ENCODE measurements at regions of chr3 and their contacts with region 1.

Region 1: GRCh38 chr3:123723522-123724168 is 138.8 kb upstream of the HACD2 start:
- DNase-seq: peak in 6 of 9 donors; percentile 37 to 55 (median 44)
- ATAC-seq: peak; percentile 68
- H3K4me3 ChIP-seq: no peak overlapping the region
- H3K4me3 Mint-ChIP-seq: no peak overlapping the region
- H3K27ac ChIP-seq: no peak overlapping the region
- H3K27ac Mint-ChIP-seq: no peak overlapping the region
- H3K4me1 ChIP-seq: no peaks in the 10 kb centered on the region
- H3K4me1 Mint-ChIP-seq: peaks cover 0 to 2% (median 0%) of the 10 kb centered on the region in 7 donors
- H3K27me3 ChIP-seq: no peaks in the 10 kb centered on the region
- H3K27me3 Mint-ChIP-seq: peaks cover 8 to 12% (median 9%) of the 10 kb centered on the region in 5 donors

Region 2: GRCh38 chr3:122957707-122958689 is 765.6 kb before region 1 on chr3:
- CTCF ChIA-PET with region 1: no interaction called
- POLR2A ChIA-PET with region 1: no interaction called
- intact Hi-C with region 1: no loop called
- DNase-seq: no peak
- ATAC-seq: no peak
- H3K4me3 ChIP-seq: no peak overlapping the region
- H3K4me3 Mint-ChIP-seq: no peak overlapping the region
- H3K27ac ChIP-seq: no peak overlapping the region
- H3K27ac Mint-ChIP-seq: no peak overlapping the region
- H3K4me1 ChIP-seq: no peaks in the 10 kb centered on the region
- H3K4me1 Mint-ChIP-seq: no peaks in the 10 kb centered on the region
- H3K27me3 ChIP-seq: no peaks in the 10 kb centered on the region
- H3K27me3 Mint-ChIP-seq: peaks cover 4 to 32% (median 17%) of the 10 kb centered on the region in 5 donors

Region 3: DNA sequence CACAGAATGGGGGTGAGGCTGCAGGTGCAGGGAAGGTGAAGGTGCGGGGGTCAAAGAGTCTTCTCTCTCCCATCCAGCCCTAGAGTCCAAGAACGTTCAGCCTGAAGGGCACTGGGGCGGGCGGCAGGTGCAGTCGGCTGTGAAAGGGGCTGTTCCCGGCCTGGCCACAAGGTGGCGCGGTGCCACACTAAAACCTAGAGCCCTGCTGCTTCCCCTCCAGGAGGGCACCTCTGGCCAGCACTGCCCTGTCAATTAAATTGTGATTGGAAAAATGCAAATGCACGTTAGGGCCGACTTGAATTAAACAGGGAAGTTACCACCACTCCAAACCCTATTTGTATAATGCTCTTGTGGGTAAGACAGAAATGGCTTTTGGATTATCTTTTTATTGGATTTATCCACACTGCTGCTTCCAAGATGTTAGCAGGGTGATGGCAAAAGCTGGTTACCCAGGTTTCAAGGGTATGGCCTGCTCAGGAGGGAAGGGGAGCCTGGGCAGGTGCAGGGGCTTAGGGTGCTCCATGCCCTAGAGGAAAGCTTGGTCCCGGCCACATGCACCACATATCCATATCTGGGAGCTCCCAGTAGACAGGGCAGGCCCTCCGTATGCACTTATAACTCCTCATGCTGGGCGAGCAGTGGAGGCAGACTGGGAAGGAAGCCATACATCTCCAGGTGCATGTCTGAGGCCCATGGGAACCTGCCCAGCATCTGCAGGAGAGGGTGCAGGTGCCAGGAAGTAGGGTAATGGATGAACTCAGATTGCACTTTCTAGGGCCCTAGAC is 394.6 kb before region 1 on chr3:
- CTCF ChIA-PET with region 1: no interaction called
- POLR2A ChIA-PET with region 1: no interaction called
- intact Hi-C with region 1: loop called in 1 of 2 experiments (anchors 1 kb)
- DNase-seq: peak; percentile 26 to 78 (median 63)
- ATAC-seq: peak; percentile 77
- H3K4me3 ChIP-seq: no peak overlapping the region
- H3K4me3 Mint-ChIP-seq: no peak overlapping the region
- H3K27ac ChIP-seq: no peak overlapping the region
- H3K27ac Mint-ChIP-seq: no peak overlapping the region
- H3K4me1 ChIP-seq: no peaks in the 10 kb centered on the region
- H3K4me1 Mint-ChIP-seq: peaks cover 0 to 5% (median 0%) of the 10 kb centered on the region in 7 donors
- H3K27me3 ChIP-seq: no peaks in the 10 kb centered on the region
- H3K27me3 Mint-ChIP-seq: peaks cover 0 to 10% (median 0%) of the 10 kb centered on the region in 5 donors

Region 4: DNA sequence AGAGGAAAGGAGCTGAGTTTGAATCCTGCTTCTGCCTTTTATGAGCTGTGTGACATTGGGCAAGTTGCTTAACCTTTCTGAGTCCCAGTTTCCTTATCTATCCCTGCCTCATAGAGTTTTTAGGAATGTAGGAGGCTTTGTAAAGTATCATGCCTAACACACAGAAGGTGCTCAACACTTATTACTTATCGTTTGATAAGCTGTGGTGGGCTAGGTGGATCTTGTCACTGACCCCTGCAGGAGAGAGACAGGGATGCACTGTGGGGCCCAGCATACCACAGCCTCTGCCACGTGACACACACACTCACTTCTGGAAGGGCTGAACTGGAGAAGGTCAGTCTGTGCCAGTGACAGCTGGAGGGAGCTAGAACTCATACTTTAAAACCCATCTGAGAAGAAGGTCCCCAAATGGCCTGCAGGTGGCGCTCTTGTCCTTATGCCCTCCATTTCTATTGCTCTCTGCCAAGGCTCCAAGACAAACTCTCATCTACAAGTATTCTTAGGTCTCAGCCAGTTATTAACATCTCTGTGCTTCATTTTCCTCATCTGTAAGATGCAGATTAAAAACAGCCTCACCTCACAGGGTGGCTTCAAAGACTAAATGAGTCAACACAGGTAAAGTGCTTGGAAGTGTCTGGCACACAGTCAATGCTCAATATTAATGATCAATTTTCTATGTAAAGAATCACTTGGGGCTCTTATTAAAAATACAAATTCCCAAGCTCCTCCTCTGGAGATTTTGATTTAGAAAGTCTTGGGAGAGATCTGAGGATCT is 81.3 kb before region 1 on chr3:
- CTCF ChIA-PET with region 1: no interaction called
- POLR2A ChIA-PET with region 1: no interaction called
- intact Hi-C with region 1: loop called in 1 of 2 experiments (anchors 2 kb)
- DNase-seq: peak in 3 of 9 donors; percentile 3 to 52 (median 15)
- ATAC-seq: peak; percentile 67
- H3K4me3 ChIP-seq: no peak overlapping the region
- H3K4me3 Mint-ChIP-seq: no peak overlapping the region
- H3K27ac ChIP-seq: no peak overlapping the region
- H3K27ac Mint-ChIP-seq: peak overlapping the region in 1 of 9 donors; percentile 47
- H3K4me1 ChIP-seq: no peaks in the 10 kb centered on the region
- H3K4me1 Mint-ChIP-seq: peaks cover 0 to 3% (median 0%) of the 10 kb centered on the region in 7 donors
- H3K27me3 ChIP-seq: no peaks in the 10 kb centered on the region
- H3K27me3 Mint-ChIP-seq: peaks cover 0 to 3% (median 0%) of the 10 kb centered on the region in 5 donors

Region 5: GRCh38 chr3:123652346-123652984 is 71.2 kb before region 1 on chr3:
- CTCF ChIA-PET with region 1: no interaction called
- POLR2A ChIA-PET with region 1: no interaction called
- intact Hi-C with region 1: loop called in 1 of 2 experiments (anchors 2 kb)
- DNase-seq: peak in 2 of 9 donors; percentile 12 to 45
- ATAC-seq: peak; percentile 76
- H3K4me3 ChIP-seq: no peak overlapping the region
- H3K4me3 Mint-ChIP-seq: no peak overlapping the region
- H3K27ac ChIP-seq: no peak overlapping the region
- H3K27ac Mint-ChIP-seq: no peak overlapping the region
- H3K4me1 ChIP-seq: no peaks in the 10 kb centered on the region
- H3K4me1 Mint-ChIP-seq: no peaks in the 10 kb centered on the region
- H3K27me3 ChIP-seq: no peaks in the 10 kb centered on the region
- H3K27me3 Mint-ChIP-seq: no peaks in the 10 kb centered on the region

Measured in naive thymus-derived CD4-positive, alpha-beta T cell (primary cell).